Naive thymus-derived CD4-positive, alpha-beta T cell (primary cell): ENCODE measurements at regions of chr4 and their contacts with region 1.

Region 1: DNA sequence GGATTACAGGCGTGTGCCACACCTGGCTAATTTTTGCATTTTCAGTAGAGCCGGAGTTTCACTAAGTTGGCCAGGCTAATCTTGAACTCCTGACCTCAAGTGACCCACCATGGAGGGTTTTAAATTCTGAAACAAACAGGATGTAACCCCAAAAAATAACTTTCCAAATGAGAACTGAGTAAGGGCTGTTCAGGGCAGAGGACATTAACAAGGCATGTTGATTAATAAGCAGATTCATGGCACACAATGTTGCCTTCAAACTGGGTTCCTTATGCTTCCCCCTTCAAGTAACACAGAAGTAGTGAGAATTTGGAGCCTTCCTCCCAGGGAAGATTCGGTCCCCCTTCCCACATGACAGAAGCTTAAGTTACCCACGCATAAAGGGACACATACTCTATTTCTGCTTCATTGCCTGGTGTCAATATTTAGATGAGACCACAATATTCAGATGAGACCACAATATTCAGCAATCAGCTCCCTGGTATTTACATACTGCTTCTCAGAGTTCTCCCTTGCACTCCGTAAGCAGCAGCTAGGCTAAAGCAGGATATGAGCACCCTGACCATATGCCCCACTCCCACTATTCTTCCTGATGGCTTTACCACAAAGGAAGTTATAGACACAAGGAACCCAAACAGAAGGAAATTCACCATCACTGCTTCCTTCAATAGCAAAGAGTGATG is 21.4 kb downstream of the GRSF1 start:
- DNase-seq: no peak
- ATAC-seq: peak; percentile 8
- H3K4me3 ChIP-seq: no peak overlapping the region
- H3K4me3 Mint-ChIP-seq: no peak overlapping the region
- H3K27ac ChIP-seq: no peak overlapping the region
- H3K27ac Mint-ChIP-seq: peak overlapping the region in 7 of 9 donors; percentile 2 to 67 (median 28)
- H3K4me1 ChIP-seq: no peaks in the 10 kb centered on the region
- H3K4me1 Mint-ChIP-seq: peaks cover 0 to 19% (median 13%) of the 10 kb centered on the region in 7 donors
- H3K27me3 ChIP-seq: no peaks in the 10 kb centered on the region
- H3K27me3 Mint-ChIP-seq: no peaks in the 10 kb centered on the region

Region 2: DNA sequence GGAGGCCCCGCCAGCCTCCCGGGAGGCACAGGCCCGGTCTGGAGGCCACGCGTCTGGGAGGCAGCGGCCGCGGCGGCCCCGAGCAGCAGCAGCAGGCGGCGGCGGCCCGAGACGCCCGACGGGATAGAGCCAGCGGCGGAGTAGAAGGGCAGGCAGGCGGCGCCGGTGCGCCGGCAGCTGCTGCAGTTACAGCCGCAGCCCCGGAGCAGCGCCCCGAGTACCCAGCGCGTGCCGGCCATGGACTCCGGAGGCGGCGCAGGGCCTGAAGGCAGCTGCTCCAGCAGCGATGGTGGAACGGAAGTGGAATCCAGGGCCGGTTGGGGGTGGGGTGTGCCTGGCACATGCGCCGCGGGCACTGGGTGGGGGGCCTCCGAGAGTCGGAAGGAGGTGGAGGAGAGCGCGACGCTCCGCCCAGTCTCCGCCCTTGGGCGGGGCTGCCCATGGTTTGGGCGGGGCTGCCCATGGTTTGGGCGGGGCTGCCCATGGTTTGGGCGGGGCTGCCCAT is 21.3 kb after region 1 on chr4 and contains the start of gene GRSF1:
- CTCF ChIA-PET with region 1: no interaction called
- POLR2A ChIA-PET with region 1: interaction called, 3 read pairs
- intact Hi-C with region 1: loop called in 1 of 2 experiments (anchors 2 kb)
- DNase-seq: peak; percentile 92 to 96 (median 95)
- ATAC-seq: peak; percentile 96
- H3K4me3 ChIP-seq: peak within 1 kb of the TSS; percentile 83
- H3K4me3 Mint-ChIP-seq: peak within 1 kb of the TSS; percentile 89 to 99 (median 97)
- H3K27ac ChIP-seq: peak within 1 kb of the TSS; percentile 88
- H3K27ac Mint-ChIP-seq: peak within 1 kb of the TSS; percentile 91 to 98 (median 96)
- H3K4me1 ChIP-seq: peaks cover 17 to 22% of the 10 kb centered on the region in 2 donors
- H3K4me1 Mint-ChIP-seq: peaks cover 8 to 40% (median 29%) of the 10 kb centered on the region in 7 donors
- H3K27me3 ChIP-seq: no peaks in the 10 kb centered on the region
- H3K27me3 Mint-ChIP-seq: no peaks in the 10 kb centered on the region
- total RNA-seq, gene GRSF1: 35.9 to 76.0 (median 48.0) TPM

Region 3: DNA sequence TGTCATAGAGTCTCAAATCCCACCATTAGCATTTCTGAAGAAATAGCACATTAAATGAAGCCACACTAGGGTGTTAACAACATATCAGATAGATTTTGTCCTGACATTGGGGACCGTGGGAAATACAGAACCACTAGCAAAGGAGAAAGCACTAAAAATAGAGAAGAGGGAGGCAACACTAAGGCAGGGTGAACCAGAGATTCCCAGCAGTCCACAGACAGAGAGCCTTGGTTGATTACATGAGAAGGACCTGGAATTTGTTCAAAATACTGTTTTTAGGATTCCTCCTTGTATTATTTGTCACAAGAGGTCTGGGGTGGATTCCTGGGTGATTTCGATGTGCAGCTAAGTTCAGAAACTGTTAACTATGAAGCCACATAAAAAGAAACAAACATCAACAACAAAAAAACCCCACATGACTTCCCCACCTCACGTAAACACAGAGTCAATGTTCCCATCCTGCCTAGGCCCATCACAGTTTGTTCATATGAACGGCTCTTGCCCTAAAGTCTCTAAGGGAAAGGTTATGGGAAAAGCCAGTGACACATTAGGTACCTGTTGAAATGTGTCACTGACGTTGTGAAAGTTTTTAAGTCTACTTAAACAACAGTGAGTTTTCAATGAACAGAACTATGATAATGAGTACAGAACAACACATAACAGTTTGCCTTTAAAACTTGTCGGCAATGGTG is 44.9 kb after region 1 on chr4:
- CTCF ChIA-PET with region 1: no interaction called
- POLR2A ChIA-PET with region 1: no interaction called
- intact Hi-C with region 1: no loop called
- DNase-seq: no peak
- ATAC-seq: no peak
- H3K4me3 ChIP-seq: no peak overlapping the region
- H3K4me3 Mint-ChIP-seq: peak overlapping the region in 1 of 10 donors; percentile 69
- H3K27ac ChIP-seq: no peak overlapping the region
- H3K27ac Mint-ChIP-seq: peak overlapping the region in 1 of 9 donors; percentile 79
- H3K4me1 ChIP-seq: no peaks in the 10 kb centered on the region
- H3K4me1 Mint-ChIP-seq: peaks cover 0 to 11% (median 3%) of the 10 kb centered on the region in 7 donors
- H3K27me3 ChIP-seq: no peaks in the 10 kb centered on the region
- H3K27me3 Mint-ChIP-seq: no peaks in the 10 kb centered on the region

Region 4: GRCh38 chr4:71453531-71453930 is 635.2 kb after region 1 on chr4:
- CTCF ChIA-PET with region 1: no interaction called
- POLR2A ChIA-PET with region 1: no interaction called
- intact Hi-C with region 1: no loop called
- DNase-seq: no peak
- ATAC-seq: no peak
- H3K4me3 ChIP-seq: no peak overlapping the region
- H3K4me3 Mint-ChIP-seq: no peak overlapping the region
- H3K27ac ChIP-seq: no peak overlapping the region
- H3K27ac Mint-ChIP-seq: no peak overlapping the region
- H3K4me1 ChIP-seq: no peaks in the 10 kb centered on the region
- H3K4me1 Mint-ChIP-seq: no peaks in the 10 kb centered on the region
- H3K27me3 ChIP-seq: no peaks in the 10 kb centered on the region
- H3K27me3 Mint-ChIP-seq: peaks cover 0 to 9% (median 3%) of the 10 kb centered on the region in 5 donors